ENCODE measurements at regions of chr9 and their contacts with region 1.

Region 1: GRCh38 chr9:107282753-107283625 is at the start of gene RAD23B:
- DNase-seq: peak; percentile 99
- ATAC-seq: peak; percentile 82
- H3K4me3 ChIP-seq: peak within 1 kb of the TSS; percentile 72 to 94 (median 88)
- H3K4me3 Mint-ChIP-seq: peak within 1 kb of the TSS; percentile 94
- H3K27ac ChIP-seq: peak within 1 kb of the TSS; percentile 72 to 93
- H3K27ac Mint-ChIP-seq: peak within 1 kb of the TSS; percentile 94
- H3K4me1 ChIP-seq: peaks cover 33 to 49% of the 10 kb centered on the region in 2 donors
- H3K4me1 Mint-ChIP-seq: peaks cover 62% of the 10 kb centered on the region
- H3K27me3 ChIP-seq: no peaks in the 10 kb centered on the region
- H3K27me3 Mint-ChIP-seq: no peaks in the 10 kb centered on the region
- CTCF ChIP-seq: no peak
- total RNA-seq, gene RAD23B: 76.6 and 78.2 TPM in 2 replicates

Region 2: DNA sequence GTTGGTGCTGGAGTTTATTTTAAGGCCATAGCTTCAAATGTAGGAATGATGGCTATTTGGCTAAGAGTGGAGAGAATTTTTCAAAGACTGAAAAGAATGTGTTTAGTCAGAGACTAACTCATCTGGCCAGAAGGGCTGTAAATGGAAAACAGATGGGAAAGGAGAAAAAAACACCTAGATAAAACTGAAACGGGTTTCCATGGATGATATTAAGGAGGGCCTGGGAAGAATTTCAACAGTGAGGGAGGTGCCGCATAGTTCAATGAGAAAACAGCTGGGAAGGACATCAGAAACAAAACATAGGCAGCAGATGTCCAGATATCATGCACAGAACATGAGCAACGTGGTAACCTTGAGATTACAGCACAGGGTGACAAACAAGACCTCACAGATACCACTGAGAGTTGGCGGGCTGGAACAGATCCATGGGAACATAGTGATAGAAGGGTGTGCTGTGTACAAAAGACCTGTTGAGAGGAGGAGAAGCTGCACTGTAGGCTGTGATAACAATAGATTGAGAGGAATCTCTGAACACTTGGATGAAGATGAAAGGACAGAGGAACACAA is 31.1 kb before region 1 on chr9:
- CTCF ChIA-PET with region 1: interaction called, 3 read pairs
- POLR2A ChIA-PET with region 1: interaction called, 6 read pairs
- intact Hi-C with region 1: loop called (anchors 5 kb)
- DNase-seq: no peak
- ATAC-seq: no peak
- H3K4me3 ChIP-seq: no peak overlapping the region
- H3K4me3 Mint-ChIP-seq: no peak overlapping the region
- H3K27ac ChIP-seq: no peak overlapping the region
- H3K27ac Mint-ChIP-seq: no peak overlapping the region
- H3K4me1 ChIP-seq: no peaks in the 10 kb centered on the region
- H3K4me1 Mint-ChIP-seq: no peaks in the 10 kb centered on the region
- H3K27me3 ChIP-seq: peaks cover 0 to 11% (median 5%) of the 10 kb centered on the region in 4 experiments
- H3K27me3 Mint-ChIP-seq: peaks cover 37% of the 10 kb centered on the region
- CTCF ChIP-seq: no peak

Region 3: GRCh38 chr9:107299437-107299836 is 16.4 kb after region 1 on chr9:
- CTCF ChIA-PET with region 1: interaction called, 3 read pairs
- POLR2A ChIA-PET with region 1: no interaction called
- intact Hi-C with region 1: loop called (anchors 1 kb)
- DNase-seq: peak; percentile 24
- ATAC-seq: no peak
- H3K4me3 ChIP-seq: no peak overlapping the region
- H3K4me3 Mint-ChIP-seq: no peak overlapping the region
- H3K27ac ChIP-seq: peak overlapping the region in 1 of 2 donors; percentile 29
- H3K27ac Mint-ChIP-seq: no peak overlapping the region
- H3K4me1 ChIP-seq: peaks cover 5 to 25% of the 10 kb centered on the region in 2 donors
- H3K4me1 Mint-ChIP-seq: peaks cover 43% of the 10 kb centered on the region
- H3K27me3 ChIP-seq: no peaks in the 10 kb centered on the region
- H3K27me3 Mint-ChIP-seq: no peaks in the 10 kb centered on the region
- CTCF ChIP-seq: peak; percentile 65

Region 4: DNA sequence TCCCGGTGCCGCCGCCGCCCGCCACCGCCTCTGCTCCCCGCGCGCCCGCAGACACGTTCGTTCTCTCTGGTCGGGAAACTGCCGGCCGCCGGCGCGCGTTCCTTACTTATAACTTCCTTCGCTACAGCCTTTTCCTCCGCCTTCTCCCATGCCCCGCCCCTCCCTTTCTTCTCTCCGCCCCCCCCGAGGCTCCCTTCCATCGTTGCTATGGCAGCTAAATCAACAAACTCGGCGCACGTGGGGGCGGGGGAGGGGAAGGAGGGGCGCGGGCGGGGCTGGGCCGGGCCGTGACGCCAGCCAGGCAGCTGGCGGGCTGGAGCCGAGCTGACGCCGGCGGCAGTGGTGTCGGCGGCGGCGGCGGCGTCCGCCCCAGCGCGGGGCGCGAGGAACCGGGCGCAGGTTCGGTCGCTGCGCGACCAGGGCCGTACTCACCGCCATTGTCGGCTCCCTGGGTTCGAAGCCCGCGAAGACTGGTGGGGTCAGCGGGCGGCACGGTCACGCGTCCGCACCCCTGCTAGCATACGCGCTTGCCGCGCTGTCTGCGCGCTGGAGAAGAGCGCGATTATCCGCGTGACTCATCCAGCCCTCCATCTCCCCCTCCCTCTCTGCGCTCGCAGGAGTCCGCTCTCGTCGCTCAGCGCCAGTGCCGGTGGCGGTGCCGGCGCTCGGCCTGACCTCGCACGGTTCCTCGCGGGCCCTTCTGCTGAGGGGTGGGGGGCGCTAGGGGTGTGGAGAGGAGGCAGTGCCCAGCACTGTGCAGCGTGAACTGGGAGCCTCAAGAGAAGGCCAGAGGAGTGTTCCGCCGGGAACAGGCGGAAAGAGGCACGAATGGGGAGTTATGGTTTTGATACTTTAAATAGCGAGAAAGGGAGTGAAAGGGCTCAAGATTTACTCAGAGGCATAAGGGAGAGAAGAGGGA is 207.0 kb after region 1 on chr9 and contains the start of gene KLF4:
- CTCF ChIA-PET with region 1: no interaction called
- POLR2A ChIA-PET with region 1: interaction called, 6 read pairs
- intact Hi-C with region 1: loop called (anchors 5 kb)
- DNase-seq: peak; percentile 86
- ATAC-seq: peak; percentile 74
- H3K4me3 ChIP-seq: peak within 1 kb of the TSS; percentile 53 to 86 (median 68)
- H3K4me3 Mint-ChIP-seq: peak within 1 kb of the TSS; percentile 87
- H3K27ac ChIP-seq: peak within 1 kb of the TSS in 1 of 2 donors; percentile 51
- H3K27ac Mint-ChIP-seq: peak within 1 kb of the TSS; percentile 78
- H3K4me1 ChIP-seq: peaks cover 35 to 42% of the 10 kb centered on the region in 2 donors
- H3K4me1 Mint-ChIP-seq: peaks cover 22% of the 10 kb centered on the region
- H3K27me3 ChIP-seq: peaks cover 0 to 51% (median 26%) of the 10 kb centered on the region in 4 experiments
- H3K27me3 Mint-ChIP-seq: peaks cover 49% of the 10 kb centered on the region
- CTCF ChIP-seq: no peak
- total RNA-seq, gene KLF4: 3.7 and 3.8 TPM in 2 replicates

Region 5: GRCh38 chr9:109012876-109013678 is 1730.1 kb after region 1 on chr9 and contains the start of gene CTNNAL1:
- CTCF ChIA-PET with region 1: no interaction called
- POLR2A ChIA-PET with region 1: no interaction called
- intact Hi-C with region 1: loop called (anchors 5 kb)
- DNase-seq: peak; percentile 87
- ATAC-seq: peak; percentile 97
- H3K4me3 ChIP-seq: peak within 1 kb of the TSS; percentile 43 to 80 (median 71)
- H3K4me3 Mint-ChIP-seq: peak within 1 kb of the TSS; percentile 94
- H3K27ac ChIP-seq: peak within 1 kb of the TSS; percentile 9 to 50
- H3K27ac Mint-ChIP-seq: peak within 1 kb of the TSS; percentile 90
- H3K4me1 ChIP-seq: peaks cover 16 to 19% of the 10 kb centered on the region in 2 donors
- H3K4me1 Mint-ChIP-seq: peaks cover 42% of the 10 kb centered on the region
- H3K27me3 ChIP-seq: peaks cover 0 to 16% (median 10%) of the 10 kb centered on the region in 4 experiments
- H3K27me3 Mint-ChIP-seq: peaks cover 6% of the 10 kb centered on the region
- CTCF ChIP-seq: no peak
- total RNA-seq, gene CTNNAL1: 1.5 and 2.3 TPM in 2 replicates

Measured in B cell (primary cell).